Astrocyte of the cerebellum (primary cell): ENCODE measurements at regions of chr1 and their contacts with region 1.

Region 1: DNA sequence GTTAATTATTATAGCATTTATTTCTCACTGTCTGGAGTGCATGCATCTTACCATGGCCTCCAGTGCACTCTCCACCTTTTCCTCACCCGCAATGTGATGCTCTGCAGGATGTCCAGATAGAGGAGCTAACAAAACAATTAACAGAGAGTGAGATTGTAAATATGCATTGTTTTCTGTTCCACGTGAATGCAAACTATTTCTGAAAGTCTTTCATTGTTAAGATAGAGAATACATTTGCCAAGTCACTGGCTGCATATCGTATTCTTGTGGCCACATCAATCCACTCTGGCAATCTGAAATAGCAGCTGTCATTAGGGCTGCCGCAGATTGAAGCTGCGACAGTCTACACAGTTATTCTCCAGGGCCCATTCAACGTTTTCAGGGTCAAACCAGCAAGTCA is 143.8 kb downstream of the DUSP10 start:
- DNase-seq: no peak
- H3K4me3 ChIP-seq: no peak overlapping the region
- CTCF ChIP-seq: no peak

Region 2: DNA sequence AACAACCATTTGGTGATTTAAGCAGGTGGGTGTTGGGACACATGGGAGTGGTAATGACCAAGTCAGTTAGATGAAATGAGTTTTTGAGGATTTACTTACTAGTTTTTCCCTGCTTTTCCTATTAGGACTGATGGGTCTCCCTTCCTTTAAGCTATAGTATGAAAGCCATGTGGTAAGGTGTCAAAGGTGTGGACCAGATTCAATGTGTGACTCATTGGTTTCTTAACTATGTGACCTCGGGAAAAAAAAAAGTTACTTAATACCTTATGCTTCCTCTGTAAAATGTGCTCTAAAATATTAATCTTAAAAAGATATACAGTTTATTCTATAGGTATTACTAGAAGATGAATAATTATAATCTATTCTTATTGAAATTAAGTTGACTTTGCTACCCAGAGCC is 50.1 kb after region 1 on chr1:
- in situ Hi-C with region 1: no loop called
- DNase-seq: no peak
- H3K4me3 ChIP-seq: no peak overlapping the region
- CTCF ChIP-seq: no peak

Region 3: DNA sequence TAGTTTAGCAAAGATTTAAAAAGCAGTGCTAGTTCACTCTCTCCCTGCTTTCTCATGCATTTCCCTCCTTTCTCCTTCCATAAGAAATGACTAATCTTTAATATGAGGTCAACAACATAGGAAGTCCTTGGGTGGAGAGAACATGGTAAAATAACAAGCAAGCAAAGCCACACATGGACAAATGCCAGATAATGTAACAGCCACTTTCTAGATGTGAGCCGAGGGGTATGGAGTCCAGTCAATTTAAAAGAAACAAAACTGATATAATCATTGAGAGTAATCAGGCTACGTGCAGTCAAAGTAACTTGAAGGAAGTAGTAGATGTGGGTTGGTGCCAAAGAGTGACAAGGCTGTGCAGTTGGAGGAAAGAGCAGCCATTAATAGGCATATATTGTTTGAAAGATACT is 74.1 kb after region 1 on chr1:
- in situ Hi-C with region 1: loop called (anchors 5 kb)
- DNase-seq: peak; percentile 19
- H3K4me3 ChIP-seq: no peak overlapping the region
- CTCF ChIP-seq: no peak